ENCODE measurements at regions of chr14 and their contacts with region 1.

Region 1: GRCh38 chr14:63641473-63642228 is at the start of gene WDR89:
- DNase-seq: peak; percentile 99
- H3K4me3 Mint-ChIP-seq: peak within 1 kb of the TSS; percentile 86
- H3K27ac Mint-ChIP-seq: peak within 1 kb of the TSS; percentile 99
- H3K4me1 Mint-ChIP-seq: peaks cover 18% of the 10 kb centered on the region
- H3K27me3 Mint-ChIP-seq: no peaks in the 10 kb centered on the region
- CTCF ChIP-seq: peak; percentile 67
- total RNA-seq, gene WDR89: 14.3 and 17.4 TPM in 2 replicates

Region 2: GRCh38 chr14:63224196-63224595 is 417.5 kb before region 1 on chr14:
- CTCF ChIA-PET with region 1: no interaction called
- POLR2A ChIA-PET with region 1: no interaction called
- intact Hi-C with region 1: no loop called
- DNase-seq: no peak
- H3K4me3 Mint-ChIP-seq: no peak overlapping the region
- H3K27ac Mint-ChIP-seq: no peak overlapping the region
- H3K4me1 Mint-ChIP-seq: no peaks in the 10 kb centered on the region
- H3K27me3 Mint-ChIP-seq: no peaks in the 10 kb centered on the region
- CTCF ChIP-seq: no peak

Region 3: GRCh38 chr14:63652406-63652805 is 10.8 kb after region 1 on chr14:
- CTCF ChIA-PET with region 1: interaction called, 3 read pairs
- POLR2A ChIA-PET with region 1: interaction called, 11 read pairs
- intact Hi-C with region 1: no loop called
- DNase-seq: no peak
- H3K4me3 Mint-ChIP-seq: no peak overlapping the region
- H3K27ac Mint-ChIP-seq: no peak overlapping the region
- H3K4me1 Mint-ChIP-seq: peaks cover 5% of the 10 kb centered on the region
- H3K27me3 Mint-ChIP-seq: no peaks in the 10 kb centered on the region
- CTCF ChIP-seq: no peak

Region 4: DNA sequence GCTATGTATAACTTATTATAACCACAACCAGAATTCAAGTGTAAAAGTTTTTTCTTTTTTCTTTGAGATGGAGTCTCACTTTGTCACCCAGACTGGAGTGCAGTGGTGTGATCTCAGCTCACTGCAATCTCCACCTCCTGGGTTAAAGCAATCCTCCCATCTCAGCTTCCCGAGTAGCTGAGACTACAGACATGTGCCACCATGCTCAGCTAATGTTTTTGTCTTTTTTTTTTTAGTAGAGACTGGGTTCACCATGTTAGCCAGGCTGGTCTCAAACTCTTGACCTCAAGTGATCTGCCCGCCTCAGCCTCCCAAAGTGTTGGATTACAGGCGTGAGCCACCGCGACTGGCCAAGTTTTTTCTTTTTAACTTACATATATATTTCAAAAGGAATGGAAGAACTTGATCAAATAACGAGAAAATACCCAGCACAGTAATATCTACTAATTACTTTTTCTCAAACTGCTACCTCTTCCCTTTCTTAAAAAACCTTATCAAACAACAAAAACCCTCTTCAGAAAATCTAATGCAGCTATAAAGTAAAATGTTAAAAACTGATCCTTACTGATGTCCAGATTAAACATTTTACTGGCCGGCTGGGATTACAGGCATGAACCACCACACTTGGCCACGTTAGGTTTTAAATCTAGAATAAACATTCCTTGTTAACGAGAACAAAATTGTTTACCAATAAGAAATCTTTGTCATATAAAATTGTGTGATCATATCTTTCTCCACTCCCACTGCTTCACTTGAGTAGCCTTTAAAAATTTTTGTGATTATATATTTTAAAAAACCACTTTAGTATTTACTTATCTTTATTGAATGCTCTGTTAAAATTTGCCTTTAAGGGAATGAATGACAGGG is 41.3 kb after region 1 on chr14:
- CTCF ChIA-PET with region 1: interaction called, 4 read pairs
- POLR2A ChIA-PET with region 1: interaction called, 13 read pairs
- intact Hi-C with region 1: no loop called
- DNase-seq: no peak
- H3K4me3 Mint-ChIP-seq: no peak overlapping the region
- H3K27ac Mint-ChIP-seq: no peak overlapping the region
- H3K4me1 Mint-ChIP-seq: no peaks in the 10 kb centered on the region
- H3K27me3 Mint-ChIP-seq: no peaks in the 10 kb centered on the region
- CTCF ChIP-seq: no peak

Region 5: DNA sequence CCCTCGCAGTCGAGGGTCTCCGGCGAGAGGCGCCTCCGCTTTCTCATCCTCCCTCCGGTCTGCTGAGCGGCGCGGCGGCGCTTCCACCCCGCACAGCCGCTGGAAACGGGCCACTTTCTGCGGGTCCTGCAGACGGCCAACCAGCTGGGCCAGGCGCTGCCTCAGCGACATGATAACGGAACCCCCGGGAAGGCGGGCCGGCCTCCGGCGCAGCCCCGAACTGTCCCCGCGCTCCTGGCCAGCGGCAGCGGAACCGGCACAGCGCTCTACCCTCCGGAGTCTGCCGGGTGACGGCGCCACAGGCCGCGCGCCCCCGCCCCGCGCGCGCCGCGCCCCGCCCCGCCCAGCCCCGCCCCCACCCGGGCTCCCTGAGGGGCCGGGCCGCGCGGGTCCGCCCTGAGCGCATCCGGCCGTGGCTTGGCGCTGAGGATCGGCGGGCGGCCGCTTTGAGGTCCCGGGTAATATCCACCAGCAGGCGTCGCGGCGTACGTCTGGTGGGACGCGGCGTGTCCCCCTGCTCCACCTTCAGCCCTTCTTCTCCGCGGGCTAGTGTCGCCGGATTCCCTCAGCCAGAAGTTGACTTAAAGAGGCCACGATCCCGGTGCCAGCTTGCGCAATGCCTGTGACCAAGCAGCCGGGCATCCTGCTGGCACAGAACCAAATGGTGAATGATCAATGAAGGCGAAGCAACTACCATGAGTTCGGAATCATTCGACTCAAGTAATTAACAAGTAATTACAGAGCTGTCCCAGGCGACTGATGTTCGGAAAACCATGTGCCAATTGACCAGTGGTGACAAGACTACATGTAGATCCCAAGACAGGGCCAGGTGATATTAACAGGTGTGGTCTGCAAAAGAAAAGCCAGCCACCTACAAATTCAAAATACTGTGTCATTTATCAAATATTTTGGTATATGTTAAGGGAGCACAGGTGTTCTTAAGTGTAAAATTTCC is 86.4 kb after region 1 on chr14 and contains the start of gene SGPP1:
- CTCF ChIA-PET with region 1: interaction called, 3 read pairs
- POLR2A ChIA-PET with region 1: interaction called, 62 read pairs
- intact Hi-C with region 1: loop called (anchors 2 kb)
- DNase-seq: peak; percentile 76
- H3K4me3 Mint-ChIP-seq: peak within 1 kb of the TSS; percentile 99
- H3K27ac Mint-ChIP-seq: peak within 1 kb of the TSS; percentile 93
- H3K4me1 Mint-ChIP-seq: peaks cover 23% of the 10 kb centered on the region
- H3K27me3 Mint-ChIP-seq: no peaks in the 10 kb centered on the region
- CTCF ChIP-seq: peak; percentile 31
- total RNA-seq, gene SGPP1: 20.8 and 22.7 TPM in 2 replicates

Region 6: DNA sequence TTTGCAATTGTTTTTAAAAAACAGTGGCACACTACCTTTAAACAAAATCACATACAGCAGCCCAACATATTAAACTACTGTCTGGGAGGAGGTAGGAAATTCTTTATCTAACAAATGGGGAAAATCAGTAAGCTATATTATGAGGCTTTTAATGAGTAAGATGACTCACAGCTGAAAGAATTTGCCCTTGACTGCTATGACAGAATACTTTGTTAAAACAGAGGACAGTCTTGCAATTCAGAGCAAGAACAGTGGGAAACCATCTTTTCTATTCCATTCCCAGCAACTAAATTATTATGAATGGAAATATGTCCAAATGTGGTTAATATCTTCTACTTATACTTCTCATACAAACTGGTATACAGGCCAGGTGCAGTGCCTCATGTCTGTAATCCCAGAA is 135.4 kb after region 1 on chr14:
- CTCF ChIA-PET with region 1: no interaction called
- POLR2A ChIA-PET with region 1: interaction called, 26 read pairs
- intact Hi-C with region 1: no loop called
- DNase-seq: peak; percentile 41
- H3K4me3 Mint-ChIP-seq: no peak overlapping the region
- H3K27ac Mint-ChIP-seq: peak overlapping the region; percentile 31
- H3K4me1 Mint-ChIP-seq: no peaks in the 10 kb centered on the region
- H3K27me3 Mint-ChIP-seq: no peaks in the 10 kb centered on the region
- CTCF ChIP-seq: no peak